ENCODE measurements at regions of chr3 and their contacts with region 1.

Region 1: DNA sequence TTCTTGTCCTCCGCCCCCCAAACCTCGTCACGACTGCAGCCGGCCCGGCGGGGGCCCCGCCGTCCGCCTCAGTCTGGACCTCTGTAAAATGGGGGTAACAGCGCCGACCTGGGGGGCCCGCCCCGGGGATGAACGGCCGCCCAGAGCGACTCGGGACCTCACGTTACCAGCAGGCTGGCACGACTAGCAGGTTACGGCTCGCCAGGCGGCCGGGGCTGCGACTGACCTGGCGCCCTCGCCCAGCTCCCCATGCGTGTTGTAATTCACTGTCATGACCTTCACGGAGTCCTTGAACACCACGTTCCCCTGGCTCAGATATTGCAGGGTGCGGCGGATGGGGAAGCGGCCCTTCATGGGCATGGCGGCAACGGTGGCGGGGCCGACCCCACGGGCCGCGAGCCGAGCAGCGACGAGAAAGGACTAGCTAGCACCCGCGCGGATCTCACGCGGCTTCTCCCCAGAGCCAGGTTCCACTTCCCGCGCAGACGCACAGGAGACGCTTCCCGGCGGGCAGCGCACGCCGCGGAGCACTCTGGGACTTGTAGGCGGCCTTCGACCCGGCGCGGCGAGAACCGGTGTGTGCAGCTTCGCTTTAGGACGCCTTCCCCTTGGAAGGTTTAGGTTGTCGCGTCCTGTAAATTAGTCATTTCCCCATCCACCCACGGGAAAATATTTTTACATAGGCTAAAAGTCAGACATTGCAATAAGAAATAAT is at the start of gene MRPS25:
- DNase-seq: peak; percentile 94
- ATAC-seq: peak; percentile 99
- H3K4me3 Mint-ChIP-seq: peak within 1 kb of the TSS; percentile 96
- H3K27ac Mint-ChIP-seq: peak within 1 kb of the TSS; percentile 98
- H3K4me1 Mint-ChIP-seq: peaks cover 24% of the 10 kb centered on the region
- H3K27me3 Mint-ChIP-seq: no peaks in the 10 kb centered on the region
- total RNA-seq, gene MRPS25: 58.5 to 64.6 TPM

Region 2: GRCh38 chr3:15051531-15051930 is 13.5 kb before region 1 on chr3:
- CTCF ChIA-PET with region 1: interaction called, 17 read pairs
- POLR2A ChIA-PET with region 1: interaction called, 14 read pairs
- DNase-seq: peak; percentile 63
- ATAC-seq: peak; percentile 84
- H3K4me3 Mint-ChIP-seq: no peak overlapping the region
- H3K27ac Mint-ChIP-seq: no peak overlapping the region
- H3K4me1 Mint-ChIP-seq: peaks cover 30% of the 10 kb centered on the region
- H3K27me3 Mint-ChIP-seq: no peaks in the 10 kb centered on the region

Region 3: GRCh38 chr3:15079091-15079490 is 14.1 kb after region 1 on chr3:
- CTCF ChIA-PET with region 1: no interaction called
- POLR2A ChIA-PET with region 1: no interaction called
- DNase-seq: no peak
- ATAC-seq: no peak
- H3K4me3 Mint-ChIP-seq: no peak overlapping the region
- H3K27ac Mint-ChIP-seq: no peak overlapping the region
- H3K4me1 Mint-ChIP-seq: peaks cover 15% of the 10 kb centered on the region
- H3K27me3 Mint-ChIP-seq: no peaks in the 10 kb centered on the region

Region 4: DNA sequence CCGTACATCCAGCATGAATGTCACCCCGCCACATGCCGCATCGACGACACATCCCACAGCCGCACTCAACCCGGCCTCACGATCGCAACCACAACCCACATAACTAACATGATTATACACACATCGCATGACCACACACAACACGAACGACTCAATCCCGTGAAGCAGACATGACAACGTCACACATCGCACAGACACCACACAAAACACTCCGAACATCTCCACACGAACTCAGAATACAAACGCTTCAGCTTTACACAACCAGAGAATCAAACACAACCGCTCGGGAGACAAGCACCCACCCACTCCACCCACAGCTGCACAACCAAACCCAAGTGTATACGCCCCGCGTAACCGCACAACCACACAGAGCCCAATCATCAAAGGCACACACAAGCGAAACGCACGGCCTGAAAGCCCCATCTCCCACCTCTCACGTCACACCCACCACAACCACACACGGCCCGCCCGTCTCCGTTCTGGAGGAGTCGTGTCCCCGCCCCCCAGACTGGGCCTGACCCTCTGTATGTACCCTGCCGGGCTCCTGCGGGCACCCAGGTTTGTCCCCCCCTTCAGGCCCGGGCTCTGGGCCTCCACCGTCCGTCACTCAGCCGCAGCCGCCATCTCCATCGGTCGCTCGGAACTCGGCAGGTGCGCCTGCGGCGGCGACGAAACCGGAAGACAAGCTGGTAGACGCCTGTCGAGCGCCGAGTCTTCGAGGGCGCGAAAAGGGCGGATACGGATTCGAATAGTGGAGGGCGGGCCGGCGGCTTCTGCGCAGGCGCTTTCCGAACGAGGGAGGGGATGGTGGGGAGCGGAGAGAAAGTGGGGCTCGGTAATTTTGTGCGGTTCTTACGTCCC is 33.7 kb after region 1 on chr3 and contains the start of gene RBSN:
- CTCF ChIA-PET with region 1: interaction called, 4 read pairs
- POLR2A ChIA-PET with region 1: interaction called, 21 read pairs
- DNase-seq: peak; percentile 97
- ATAC-seq: peak; percentile 85
- H3K4me3 Mint-ChIP-seq: peak within 1 kb of the TSS; percentile 93
- H3K27ac Mint-ChIP-seq: peak within 1 kb of the TSS; percentile 97
- H3K4me1 Mint-ChIP-seq: peaks cover 47% of the 10 kb centered on the region
- H3K27me3 Mint-ChIP-seq: peaks cover 2% of the 10 kb centered on the region
- total RNA-seq, gene RBSN: 16.4 to 17.8 TPM

Measured in activated CD8-positive, alpha-beta T cell treated with anti-CD3 and anti-CD28 coated beads, Interleukin-2, amount 10 ng/mL, durations not matched to agents 7 days and 5 days (primary cell).